Activated naive CD4-positive, alpha-beta T cell treated with anti-CD3 and anti-CD28 coated beads for 36 hours (primary cell): ENCODE measurements at regions of chr5 and their contacts with region 1.

Region 1: GRCh38 chr5:154467655-154468354 is 10.2 kb downstream of the HAND1 start:
- DNase-seq: peak; percentile 88
- H3K4me3 Mint-ChIP-seq: no peak overlapping the region
- H3K27ac Mint-ChIP-seq: no peak overlapping the region
- H3K4me1 Mint-ChIP-seq: peaks cover 6% of the 10 kb centered on the region
- H3K27me3 Mint-ChIP-seq: peaks cover 36% of the 10 kb centered on the region

Region 2: GRCh38 chr5:154176181-154176580 is 291.6 kb before region 1 on chr5:
- CTCF ChIA-PET with region 1: no interaction called
- intact Hi-C with region 1: no loop called
- DNase-seq: no peak
- H3K4me3 Mint-ChIP-seq: no peak overlapping the region
- H3K27ac Mint-ChIP-seq: no peak overlapping the region
- H3K4me1 Mint-ChIP-seq: no peaks in the 10 kb centered on the region
- H3K27me3 Mint-ChIP-seq: peaks cover 4% of the 10 kb centered on the region

Region 3: DNA sequence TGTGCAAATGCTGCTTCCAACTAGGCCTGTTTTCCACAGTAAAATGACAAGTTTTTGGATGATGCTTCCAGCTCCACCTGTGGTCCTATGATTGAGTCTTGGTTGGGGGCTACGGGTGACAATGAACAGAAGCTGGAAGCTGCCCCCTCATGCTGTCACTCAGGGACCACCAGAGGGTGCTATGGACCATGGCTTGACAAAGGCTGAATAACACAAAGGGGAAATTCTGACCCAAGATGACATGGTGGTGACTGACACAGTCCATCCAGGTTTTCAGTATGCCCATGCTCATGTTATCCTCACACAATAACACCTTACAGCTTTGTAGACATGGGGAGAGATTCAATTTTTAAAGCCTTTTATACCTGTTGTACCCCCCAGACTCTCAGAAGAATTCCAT is 45.9 kb before region 1 on chr5:
- CTCF ChIA-PET with region 1: interaction called, 3 read pairs
- intact Hi-C with region 1: loop called (anchors 2 kb)
- DNase-seq: peak; percentile 43
- H3K4me3 Mint-ChIP-seq: no peak overlapping the region
- H3K27ac Mint-ChIP-seq: no peak overlapping the region
- H3K4me1 Mint-ChIP-seq: peaks cover 2% of the 10 kb centered on the region
- H3K27me3 Mint-ChIP-seq: no peaks in the 10 kb centered on the region

Region 4: GRCh38 chr5:154513669-154514084 is 45.9 kb after region 1 on chr5:
- CTCF ChIA-PET with region 1: interaction called, 3 read pairs
- intact Hi-C with region 1: loop called (anchors 1 kb)
- DNase-seq: peak; percentile 66
- H3K4me3 Mint-ChIP-seq: no peak overlapping the region
- H3K27ac Mint-ChIP-seq: no peak overlapping the region
- H3K4me1 Mint-ChIP-seq: peaks cover 19% of the 10 kb centered on the region
- H3K27me3 Mint-ChIP-seq: peaks cover 35% of the 10 kb centered on the region

Region 5: GRCh38 chr5:154575546-154576428 is 108.0 kb after region 1 on chr5:
- CTCF ChIA-PET with region 1: interaction called, 5 read pairs
- intact Hi-C with region 1: loop called (anchors 1 kb)
- DNase-seq: peak; percentile 20
- H3K4me3 Mint-ChIP-seq: no peak overlapping the region
- H3K27ac Mint-ChIP-seq: no peak overlapping the region
- H3K4me1 Mint-ChIP-seq: no peaks in the 10 kb centered on the region
- H3K27me3 Mint-ChIP-seq: peaks cover 12% of the 10 kb centered on the region